Psoas muscle (tissue), 8 donors: ENCODE measurements at regions of chr17 and their contacts with region 1.

Region 1: DNA sequence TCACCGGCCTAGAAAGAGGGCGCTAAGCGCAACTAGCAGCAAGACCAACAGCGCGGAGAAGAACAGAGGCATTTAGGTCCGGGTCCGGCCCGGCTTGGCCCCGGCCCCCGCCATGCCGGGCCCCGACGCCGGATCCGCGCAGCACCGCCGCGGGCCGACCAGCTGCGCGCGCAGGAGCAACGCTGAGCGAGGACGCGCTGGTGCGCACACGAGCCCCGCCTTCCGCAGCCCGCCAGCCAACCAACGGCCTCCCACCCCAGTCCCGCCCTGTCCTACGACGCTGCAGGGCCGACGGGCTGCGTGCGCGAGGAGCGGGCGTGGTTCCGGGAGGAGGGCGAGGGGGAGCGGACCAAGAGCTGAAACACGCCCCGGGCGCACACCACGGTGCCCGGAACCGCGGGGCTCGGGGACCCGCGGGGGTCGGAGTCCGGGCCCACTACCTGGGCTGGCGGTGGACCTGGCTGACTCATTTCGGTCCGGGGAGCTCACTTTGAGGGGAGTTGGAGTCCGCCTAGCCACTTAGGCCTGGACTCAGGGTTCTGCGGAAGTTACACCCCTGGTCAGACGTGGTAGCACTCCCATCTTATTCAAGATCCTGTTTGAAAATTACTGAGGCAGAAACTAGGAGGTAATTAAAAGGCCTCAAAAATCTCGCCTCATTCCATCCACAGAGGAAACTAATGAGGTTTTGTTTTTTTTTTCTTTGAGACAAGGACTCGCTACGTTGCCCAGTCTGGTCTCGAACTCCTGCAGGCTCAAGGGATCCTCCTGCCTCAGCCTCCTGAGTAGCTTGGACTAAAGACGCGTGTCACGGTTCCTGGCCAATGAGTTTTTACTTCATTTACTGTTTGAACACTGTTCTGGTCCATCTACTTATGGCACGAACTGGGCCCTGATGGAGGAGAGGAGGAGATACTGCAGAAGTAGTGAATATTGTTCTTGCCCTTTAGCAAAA is at the start of gene BLTP2:
- DNase-seq: peak; percentile 97 to 98
- ATAC-seq: peak; percentile 96 to 99 (median 98)
- H3K4me3 ChIP-seq: peak within 1 kb of the TSS; percentile 87
- H3K27ac ChIP-seq: peak within 1 kb of the TSS; percentile 98
- H3K4me1 ChIP-seq: peaks cover 28% of the 10 kb centered on the region
- H3K27me3 ChIP-seq: no peaks in the 10 kb centered on the region
- CTCF ChIP-seq: peak; percentile 13
- total RNA-seq, gene BLTP2: 69.0 to 100 (median 96.0) TPM

Region 2: DNA sequence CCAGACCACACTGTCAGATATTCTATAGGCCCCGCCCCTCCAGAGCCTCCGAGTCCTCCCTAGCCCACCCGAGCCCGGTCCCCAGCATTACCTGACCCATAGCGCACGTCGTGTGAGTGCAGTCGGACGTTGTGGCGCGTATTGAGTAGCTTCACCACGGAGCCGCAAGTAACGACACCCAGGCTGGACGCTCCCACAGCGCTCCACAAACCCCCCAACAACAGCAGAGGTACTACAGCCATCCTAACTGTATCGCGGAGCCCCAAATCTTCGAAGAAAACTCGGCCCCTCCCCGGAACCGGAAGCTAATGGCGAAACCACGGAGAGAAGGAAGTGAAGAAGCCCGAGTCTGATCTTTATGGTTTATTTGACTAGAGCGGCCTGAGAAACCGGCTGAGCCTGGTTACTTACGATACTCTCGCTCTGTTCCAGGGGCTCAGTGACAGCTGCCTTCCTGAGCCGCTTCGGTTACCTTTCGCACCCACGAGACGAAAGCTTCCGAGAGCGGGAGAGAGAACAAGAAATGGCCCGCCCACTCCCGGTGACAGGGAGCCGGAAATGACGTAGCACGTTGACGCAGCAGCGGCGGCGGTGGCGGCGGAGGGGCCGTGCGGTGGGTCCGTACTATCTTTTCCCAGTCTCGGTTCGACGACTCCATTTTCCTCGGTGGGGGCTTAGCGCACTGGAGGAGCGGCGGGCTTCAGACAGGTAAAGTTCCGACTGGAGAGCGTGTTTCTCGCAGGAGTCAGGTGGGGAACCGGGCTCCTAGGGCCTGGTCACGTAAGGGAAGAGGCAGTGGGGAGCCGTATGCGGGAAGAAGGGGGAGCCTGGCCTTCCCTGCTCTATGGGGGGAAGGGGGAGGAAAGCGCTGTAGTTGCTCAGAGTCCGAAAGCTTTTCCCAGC is 16.6 kb after region 1 on chr17 and contains the starts of genes SDF2 and SUPT6H:
- intact Hi-C with region 1: loop called in 1 of 2 experiments (anchors 2 kb)
- DNase-seq: peak; percentile 92 to 94
- ATAC-seq: peak; percentile 95 to 98 (median 96)
- H3K4me3 ChIP-seq: peak within 1 kb of the TSS; percentile 89
- H3K27ac ChIP-seq: peak within 1 kb of the TSS; percentile 91
- H3K4me1 ChIP-seq: peaks cover 37% of the 10 kb centered on the region
- H3K27me3 ChIP-seq: no peaks in the 10 kb centered on the region
- CTCF ChIP-seq: no peak
- total RNA-seq, gene SDF2: 23.6 to 28.0 (median 26.7) TPM
- total RNA-seq, gene SUPT6H: 66.1 to 77.4 (median 69.8) TPM

Region 3: DNA sequence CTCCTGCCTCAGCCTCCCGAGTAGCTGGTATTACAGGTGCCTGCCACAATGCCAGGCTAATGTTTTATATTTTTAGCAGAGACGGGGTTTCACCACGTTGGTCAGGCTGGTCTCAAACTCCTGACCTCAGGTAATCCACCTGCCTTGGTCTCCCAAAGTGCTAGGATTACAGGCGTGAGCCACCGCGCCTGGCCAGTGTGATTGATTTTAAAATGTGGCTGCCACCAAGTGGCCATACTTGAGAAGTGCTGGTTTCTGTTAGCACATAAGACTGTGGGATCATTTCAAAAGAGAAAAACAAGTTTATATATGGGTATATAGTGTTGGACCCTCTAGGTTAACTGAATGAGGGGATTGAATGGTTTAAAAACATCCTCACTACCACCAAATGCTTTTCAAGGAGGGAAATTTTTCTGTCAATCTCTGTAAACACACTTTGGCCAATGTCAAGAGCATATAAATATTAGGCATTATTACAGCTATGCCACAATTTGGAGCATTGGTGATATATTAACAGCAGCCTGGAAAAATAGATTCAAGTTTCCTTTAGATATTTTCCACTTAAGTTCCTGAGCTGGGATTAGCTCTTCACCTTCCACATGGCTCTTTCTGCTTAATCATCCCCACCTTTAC is 271.2 kb after region 1 on chr17:
- intact Hi-C with region 1: loop called in 1 of 2 experiments (anchors 10 kb)
- DNase-seq: no peak
- ATAC-seq: peak; percentile 69 to 84 (median 74)
- H3K4me3 ChIP-seq: no peak overlapping the region
- H3K27ac ChIP-seq: peak overlapping the region; percentile 72
- H3K4me1 ChIP-seq: peaks cover 19% of the 10 kb centered on the region
- H3K27me3 ChIP-seq: no peaks in the 10 kb centered on the region
- CTCF ChIP-seq: peak; percentile 69